GM12878 (cell line): ENCODE measurements at regions of chr11 and their contacts with region 1.

Region 1: GRCh38 chr11:75802913-75803820 is 11.8 kb upstream of the UVRAG start:
- DNase-seq: no peak
- ATAC-seq: peak; percentile 98
- H3K4me3 ChIP-seq: no peak overlapping the region
- H3K27ac ChIP-seq: no peak overlapping the region
- H3K4me1 ChIP-seq: no peaks in the 10 kb centered on the region
- H3K27me3 ChIP-seq: no peaks in the 10 kb centered on the region
- CTCF ChIP-seq: peak; percentile 91 to 96 (median 95)
- EP300 ChIP-seq: no peak
- POLR2A ChIP-seq: no peak
- RAD21 ChIP-seq: peak; percentile 97

Region 2: DNA sequence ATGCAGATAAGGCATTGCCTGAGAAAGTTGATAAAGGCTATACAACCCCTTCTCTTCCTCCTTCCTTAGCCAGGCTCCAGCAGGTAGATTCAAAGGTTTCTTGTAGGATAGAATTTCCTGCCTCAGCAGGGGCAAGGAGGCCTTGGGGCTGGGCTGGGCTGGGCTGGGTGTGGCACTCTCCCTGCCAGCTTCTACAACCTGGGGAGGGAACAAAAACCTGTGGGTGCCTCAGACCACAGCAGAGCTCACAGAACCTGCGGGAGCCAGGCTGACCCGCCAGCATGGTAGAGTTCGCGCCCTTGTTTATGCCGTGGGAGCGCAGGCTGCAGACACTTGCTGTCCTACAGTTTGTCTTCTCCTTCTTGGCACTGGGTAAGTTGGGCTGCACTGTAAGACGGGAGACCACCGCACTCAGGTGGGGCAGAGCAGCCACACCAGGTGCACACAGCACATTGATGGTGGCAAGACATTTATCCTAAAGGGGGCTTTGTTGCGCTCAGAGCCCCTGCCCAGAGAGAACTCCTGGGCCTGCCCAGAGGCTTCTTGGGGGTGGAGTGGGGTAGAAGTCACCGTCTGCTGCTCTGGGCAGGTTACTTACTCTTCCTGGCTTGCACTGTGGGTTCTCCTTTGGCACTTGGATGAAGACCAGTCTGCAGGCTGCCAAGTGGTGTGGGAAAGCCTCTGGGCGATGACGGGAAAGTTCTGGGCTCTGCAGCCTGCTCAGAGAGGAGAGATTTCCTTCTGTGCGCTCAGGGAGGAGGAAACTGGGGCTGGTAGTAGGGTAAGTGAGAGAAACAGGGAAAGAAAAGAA is 85.4 kb before region 1 on chr11 and contains the start of gene MOGAT2:
- CTCF ChIA-PET with region 1: interaction called, 23 read pairs
- POLR2A ChIA-PET with region 1: no interaction called
- RAD21 ChIA-PET with region 1: interaction called, 9 read pairs
- SMC1A ChIA-PET with region 1: interaction called, 7 read pairs
- in situ Hi-C with region 1: no loop called
- intact Hi-C with region 1: loop called (anchors 1 kb)
- DNase-seq: no peak
- ATAC-seq: no peak
- H3K4me3 ChIP-seq: no peak within 1 kb of the TSS
- H3K27ac ChIP-seq: no peak within 1 kb of the TSS
- H3K4me1 ChIP-seq: peaks cover 11% of the 10 kb centered on the region
- H3K27me3 ChIP-seq: no peaks in the 10 kb centered on the region
- CTCF ChIP-seq: no peak
- EP300 ChIP-seq: no peak
- POLR2A ChIP-seq: no peak
- RAD21 ChIP-seq: no peak
- polyA plus RNA-seq, gene MOGAT2: 0.16 to 0.21 TPM

Region 3: GRCh38 chr11:75786101-75786736 is 16.9 kb before region 1 on chr11:
- CTCF ChIA-PET with region 1: interaction called, 16 read pairs
- POLR2A ChIA-PET with region 1: no interaction called
- RAD21 ChIA-PET with region 1: interaction called, 7 read pairs
- SMC1A ChIA-PET with region 1: interaction called, 7 read pairs
- in situ Hi-C with region 1: no loop called
- intact Hi-C with region 1: no loop called
- DNase-seq: no peak
- ATAC-seq: peak; percentile 96
- H3K4me3 ChIP-seq: no peak overlapping the region
- H3K27ac ChIP-seq: no peak overlapping the region
- H3K4me1 ChIP-seq: no peaks in the 10 kb centered on the region
- H3K27me3 ChIP-seq: no peaks in the 10 kb centered on the region
- CTCF ChIP-seq: no peak
- EP300 ChIP-seq: no peak
- POLR2A ChIP-seq: no peak
- RAD21 ChIP-seq: no peak

Region 4: GRCh38 chr11:75826461-75827230 is 23.5 kb after region 1 on chr11:
- CTCF ChIA-PET with region 1: interaction called, 8 read pairs
- POLR2A ChIA-PET with region 1: interaction called, 5 read pairs
- RAD21 ChIA-PET with region 1: interaction called, 11 read pairs
- SMC1A ChIA-PET with region 1: interaction called, 6 read pairs
- in situ Hi-C with region 1: no loop called
- intact Hi-C with region 1: no loop called
- DNase-seq: no peak
- ATAC-seq: peak; percentile 11
- H3K4me3 ChIP-seq: peak overlapping the region; percentile 63; the same call in 1 of the 2 replicates
- H3K27ac ChIP-seq: peak overlapping the region; percentile 92
- H3K4me1 ChIP-seq: peaks cover 35% of the 10 kb centered on the region
- H3K27me3 ChIP-seq: no peaks in the 10 kb centered on the region
- CTCF ChIP-seq: no peak
- EP300 ChIP-seq: no peak
- POLR2A ChIP-seq: no peak
- RAD21 ChIP-seq: no peak

Region 5: DNA sequence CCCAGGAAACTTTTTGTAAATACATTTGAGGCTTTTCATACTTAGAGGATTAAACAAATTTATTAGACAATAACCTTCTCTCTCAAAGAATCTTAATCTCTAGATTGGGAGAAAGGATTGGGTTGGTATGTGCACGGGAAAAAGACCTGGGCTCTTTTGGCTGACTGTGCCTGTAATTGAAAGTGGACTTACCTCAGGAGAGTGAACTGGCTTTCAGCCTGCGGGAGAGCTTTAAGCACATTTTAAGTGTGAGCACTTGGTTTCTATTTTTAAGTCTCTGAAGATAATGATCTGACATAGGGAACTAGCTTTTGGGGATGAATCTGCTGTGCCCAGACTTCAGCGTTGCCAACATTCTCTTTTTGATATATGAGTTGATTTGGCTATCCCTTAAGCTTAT is 47.6 kb after region 1 on chr11:
- CTCF ChIA-PET with region 1: interaction called, 12 read pairs
- POLR2A ChIA-PET with region 1: interaction called, 6 read pairs
- RAD21 ChIA-PET with region 1: no interaction called
- SMC1A ChIA-PET with region 1: interaction called, 5 read pairs
- in situ Hi-C with region 1: no loop called
- intact Hi-C with region 1: no loop called
- DNase-seq: no peak
- ATAC-seq: peak; percentile 54
- H3K4me3 ChIP-seq: no peak overlapping the region
- H3K27ac ChIP-seq: peak overlapping the region; percentile 46; the same call in 1 of the 2 replicates
- H3K4me1 ChIP-seq: peaks cover 7% of the 10 kb centered on the region
- H3K27me3 ChIP-seq: no peaks in the 10 kb centered on the region
- CTCF ChIP-seq: no peak
- EP300 ChIP-seq: no peak
- POLR2A ChIP-seq: no peak
- RAD21 ChIP-seq: no peak

Region 6: GRCh38 chr11:75873417-75874221 is 70.5 kb after region 1 on chr11:
- CTCF ChIA-PET with region 1: interaction called, 234 read pairs
- POLR2A ChIA-PET with region 1: interaction called, 3 read pairs
- RAD21 ChIA-PET with region 1: interaction called, 172 read pairs
- SMC1A ChIA-PET with region 1: interaction called, 238 read pairs
- in situ Hi-C with region 1: loop called (anchors 5 kb)
- intact Hi-C with region 1: no loop called
- DNase-seq: peak; percentile 73
- ATAC-seq: peak; percentile 90
- H3K4me3 ChIP-seq: peak overlapping the region; percentile 25
- H3K27ac ChIP-seq: peak overlapping the region; percentile 84
- H3K4me1 ChIP-seq: peaks cover 26% of the 10 kb centered on the region
- H3K27me3 ChIP-seq: no peaks in the 10 kb centered on the region
- CTCF ChIP-seq: no peak
- EP300 ChIP-seq: peak; percentile 14 to 53; a peak in 2 of 4 replicates
- POLR2A ChIP-seq: no peak
- RAD21 ChIP-seq: no peak

Region 7: GRCh38 chr11:76152086-76152681 is 349.0 kb after region 1 on chr11:
- CTCF ChIA-PET with region 1: interaction called, 28 read pairs
- POLR2A ChIA-PET with region 1: no interaction called
- RAD21 ChIA-PET with region 1: interaction called, 13 read pairs
- SMC1A ChIA-PET with region 1: interaction called, 19 read pairs
- in situ Hi-C with region 1: loop called (anchors 5 kb)
- intact Hi-C with region 1: loop called (anchors 1 kb)
- DNase-seq: peak; percentile 60
- ATAC-seq: peak; percentile 87
- H3K4me3 ChIP-seq: peak overlapping the region; percentile 66
- H3K27ac ChIP-seq: peak overlapping the region; percentile 27
- H3K4me1 ChIP-seq: peaks cover 22% of the 10 kb centered on the region
- H3K27me3 ChIP-seq: no peaks in the 10 kb centered on the region
- CTCF ChIP-seq: peak; percentile 97 to 99 (median 98); a peak in 5 of 6 replicates
- EP300 ChIP-seq: no peak
- POLR2A ChIP-seq: 0 out of 2 replicates have a peak, but pooled peaks have one; percentile 19
- RAD21 ChIP-seq: peak; percentile 97